OCI-LY7 (cell line): ENCODE measurements at regions of chr14 and their contacts with region 1.

Region 1: GRCh38 chr14:52007637-52008036 is 18.3 kb downstream of the RTRAF start:
- DNase-seq: no peak
- H3K4me3 ChIP-seq: no peak overlapping the region
- H3K27ac ChIP-seq: no peak overlapping the region
- H3K4me1 ChIP-seq: no peaks in the 10 kb centered on the region
- CTCF ChIP-seq: no peak

Region 2: GRCh38 chr14:51382506-51382905 is 625.1 kb before region 1 on chr14:
- CTCF ChIA-PET with region 1: no interaction called
- POLR2A ChIA-PET with region 1: no interaction called
- intact Hi-C with region 1: no loop called
- DNase-seq: no peak
- H3K4me3 ChIP-seq: no peak overlapping the region
- H3K27ac ChIP-seq: no peak overlapping the region
- H3K4me1 ChIP-seq: no peaks in the 10 kb centered on the region
- CTCF ChIP-seq: no peak

Region 3: DNA sequence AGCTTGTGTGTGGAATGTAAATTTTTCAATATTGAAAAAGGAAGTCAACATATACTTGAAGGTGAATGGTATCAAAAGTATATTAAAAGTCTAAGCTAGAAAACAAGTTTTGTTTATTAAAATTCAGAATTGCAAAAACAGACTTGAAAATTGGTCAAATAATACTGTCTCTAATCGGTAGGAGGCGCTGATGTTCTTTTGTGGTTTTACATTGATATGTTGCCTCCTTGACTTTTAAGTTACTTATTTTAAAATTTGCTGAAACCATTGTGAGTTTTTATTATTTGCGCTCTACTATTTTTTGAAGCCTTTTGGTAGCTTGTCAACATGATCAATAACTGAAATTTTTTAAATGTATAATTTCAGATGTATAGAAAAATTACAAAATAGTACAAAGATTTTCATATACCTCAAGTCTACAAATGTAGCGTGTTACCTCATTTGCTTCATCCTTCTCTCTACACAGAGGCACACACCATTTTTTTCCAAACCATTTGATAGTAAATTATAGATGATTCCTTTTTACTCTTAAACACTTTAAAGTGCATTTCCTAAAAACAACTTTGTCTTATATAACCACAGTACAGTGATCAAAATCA is 11.4 kb before region 1 on chr14:
- CTCF ChIA-PET with region 1: no interaction called
- POLR2A ChIA-PET with region 1: interaction called, 15 read pairs
- intact Hi-C with region 1: no loop called
- DNase-seq: peak; percentile 16
- H3K4me3 ChIP-seq: no peak overlapping the region
- H3K27ac ChIP-seq: no peak overlapping the region
- H3K4me1 ChIP-seq: peaks cover 12% of the 10 kb centered on the region
- CTCF ChIP-seq: peak; percentile 79